ENCODE measurements at regions of chr20 and their contacts with region 1.

Region 1: DNA sequence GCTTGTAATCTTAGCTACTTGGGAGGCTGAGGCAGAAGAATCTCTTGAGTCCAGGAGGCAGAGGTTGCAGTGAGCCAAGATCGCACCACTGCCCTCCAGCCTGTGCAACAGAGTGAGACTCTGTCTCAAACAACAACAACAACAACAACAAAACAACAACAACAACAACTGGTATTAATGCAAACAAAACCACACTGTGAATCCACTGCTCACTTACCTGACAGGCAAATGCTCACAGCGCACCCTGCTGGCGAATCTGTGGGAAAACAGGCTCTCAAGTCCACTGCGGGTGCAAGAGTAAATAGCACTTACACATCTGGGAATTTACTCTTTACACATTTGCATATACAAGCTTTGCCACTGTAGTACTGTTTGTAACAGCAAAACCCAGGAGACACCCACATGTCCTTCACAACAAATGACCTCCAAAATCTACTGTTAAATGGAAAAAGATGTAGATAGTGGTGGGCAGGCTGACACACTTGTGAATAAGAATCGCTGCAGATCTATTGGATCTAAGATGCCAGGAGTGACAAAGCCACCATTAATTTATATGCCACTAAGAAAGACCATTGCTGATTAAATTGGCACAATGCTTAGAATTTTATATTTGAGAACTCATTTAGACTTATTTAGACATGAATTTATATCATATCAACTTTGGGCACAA is 29.3 kb downstream of the NSFL1C start:
- DNase-seq: peak; percentile 71 to 75
- H3K4me3 ChIP-seq: no peak overlapping the region
- H3K27ac ChIP-seq: no peak overlapping the region
- H3K4me1 ChIP-seq: 0 out of 2 replicates have a peak, but pooled peaks cover 8% of the 10 kb centered on the region
- H3K27me3 ChIP-seq: no peaks in the 10 kb centered on the region
- CTCF ChIP-seq: peak; percentile 94

Region 2: GRCh38 chr20:1212607-1213396 is 224.6 kb before region 1 on chr20:
- CTCF ChIA-PET with region 1: no interaction called
- POLR2A ChIA-PET with region 1: no interaction called
- intact Hi-C with region 1: loop called (anchors 2 kb)
- DNase-seq: peak in 1 of 2 experiments; percentile 61
- H3K4me3 ChIP-seq: no peak overlapping the region
- H3K27ac ChIP-seq: no peak overlapping the region
- H3K4me1 ChIP-seq: no peaks in the 10 kb centered on the region
- H3K27me3 ChIP-seq: peaks cover 77% of the 10 kb centered on the region
- CTCF ChIP-seq: peak; percentile 82

Region 3: GRCh38 chr20:1313236-1313964 is 124.0 kb before region 1 on chr20:
- CTCF ChIA-PET with region 1: no interaction called
- POLR2A ChIA-PET with region 1: no interaction called
- intact Hi-C with region 1: loop called (anchors 1 kb)
- DNase-seq: peak in 1 of 2 experiments; percentile 60
- H3K4me3 ChIP-seq: no peak overlapping the region
- H3K27ac ChIP-seq: no peak overlapping the region
- H3K4me1 ChIP-seq: no peaks in the 10 kb centered on the region
- H3K27me3 ChIP-seq: no peaks in the 10 kb centered on the region
- CTCF ChIP-seq: peak; percentile 96

Region 4: DNA sequence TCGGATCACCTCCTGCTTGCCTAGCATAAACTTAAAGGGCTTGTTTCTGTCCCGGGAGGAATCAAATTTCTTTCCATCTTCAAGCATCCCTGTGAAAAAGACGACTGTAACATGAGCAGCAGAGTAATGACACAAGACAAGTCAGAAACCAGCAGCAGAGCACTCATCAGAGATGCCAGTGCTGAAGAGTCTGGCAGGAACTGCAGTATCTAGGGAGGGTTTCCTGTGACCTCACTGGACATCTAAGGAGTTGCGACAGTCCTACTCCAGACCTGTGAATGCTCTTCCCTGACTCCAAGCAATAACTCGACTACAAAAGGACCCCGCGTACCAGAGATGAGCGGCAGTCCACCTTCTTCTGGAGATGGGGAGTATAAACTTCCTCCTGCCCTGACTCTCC is 61.9 kb before region 1 on chr20:
- CTCF ChIA-PET with region 1: interaction called, 3 read pairs
- POLR2A ChIA-PET with region 1: interaction called, 5 read pairs
- intact Hi-C with region 1: loop called (anchors 2 kb)
- DNase-seq: no peak
- H3K4me3 ChIP-seq: no peak overlapping the region
- H3K27ac ChIP-seq: no peak overlapping the region
- H3K4me1 ChIP-seq: peaks cover 31% of the 10 kb centered on the region
- H3K27me3 ChIP-seq: no peaks in the 10 kb centered on the region
- CTCF ChIP-seq: no peak

Region 5: DNA sequence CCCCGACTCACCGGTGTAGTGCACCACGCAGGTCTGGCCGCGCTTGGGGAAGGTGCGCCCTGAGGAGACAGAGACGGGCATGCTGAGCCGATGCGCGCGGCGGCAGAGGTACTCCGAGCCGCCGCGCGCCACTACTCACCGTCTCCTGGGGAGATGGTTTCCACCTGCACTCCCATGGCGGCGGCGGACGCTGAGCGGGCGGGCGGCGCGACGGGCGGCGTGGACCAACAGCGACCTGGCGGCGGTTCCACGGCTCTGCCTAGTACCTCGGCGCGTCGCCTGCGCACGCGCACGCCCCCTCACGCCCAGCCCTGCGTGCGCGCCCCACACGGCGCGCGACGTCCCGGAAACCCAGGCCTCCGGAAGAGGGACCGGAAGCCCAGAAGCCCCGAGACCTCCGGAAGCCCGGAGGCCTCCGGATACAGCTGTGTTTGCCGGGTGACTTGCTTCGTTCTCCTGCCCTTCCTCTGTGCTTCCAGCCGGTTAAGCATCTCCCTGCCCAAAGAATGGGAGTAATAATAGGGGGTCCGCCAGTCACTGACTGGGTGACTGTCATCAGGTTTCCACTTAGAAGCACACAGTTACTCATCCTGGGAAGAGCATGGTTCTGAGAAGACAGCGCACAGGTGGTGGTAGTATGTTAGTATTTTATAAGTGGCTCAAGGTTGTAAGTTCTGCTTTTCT is 44.4 kb before region 1 on chr20 and contains the start of gene FKBP1A:
- CTCF ChIA-PET with region 1: no interaction called
- POLR2A ChIA-PET with region 1: no interaction called
- intact Hi-C with region 1: loop called (anchors 1 kb)
- DNase-seq: peak; percentile 83 to 89
- H3K4me3 ChIP-seq: peak within 1 kb of the TSS; percentile 97
- H3K27ac ChIP-seq: peak within 1 kb of the TSS; percentile 40; the same call in 1 of the 2 replicates
- H3K4me1 ChIP-seq: peaks cover 57% of the 10 kb centered on the region
- H3K27me3 ChIP-seq: no peaks in the 10 kb centered on the region
- CTCF ChIP-seq: no peak; the same call in 1 of the 2 replicates
- total RNA-seq, gene FKBP1A: 248 and 320 TPM in 2 replicates

Region 6: GRCh38 chr20:1401451-1401907 is 35.9 kb before region 1 on chr20:
- CTCF ChIA-PET with region 1: no interaction called
- POLR2A ChIA-PET with region 1: no interaction called
- intact Hi-C with region 1: loop called (anchors 2 kb)
- DNase-seq: peak in 1 of 2 experiments; percentile 56
- H3K4me3 ChIP-seq: no peak overlapping the region
- H3K27ac ChIP-seq: peak overlapping the region; percentile 89
- H3K4me1 ChIP-seq: peaks cover 51% of the 10 kb centered on the region
- H3K27me3 ChIP-seq: no peaks in the 10 kb centered on the region
- CTCF ChIP-seq: no peak

Measured in PC-9 (cell line).